Right ventricle myocardium superior (tissue), 1 donor: ENCODE measurements at regions of chr9 and their contacts with region 1.

Region 1: DNA sequence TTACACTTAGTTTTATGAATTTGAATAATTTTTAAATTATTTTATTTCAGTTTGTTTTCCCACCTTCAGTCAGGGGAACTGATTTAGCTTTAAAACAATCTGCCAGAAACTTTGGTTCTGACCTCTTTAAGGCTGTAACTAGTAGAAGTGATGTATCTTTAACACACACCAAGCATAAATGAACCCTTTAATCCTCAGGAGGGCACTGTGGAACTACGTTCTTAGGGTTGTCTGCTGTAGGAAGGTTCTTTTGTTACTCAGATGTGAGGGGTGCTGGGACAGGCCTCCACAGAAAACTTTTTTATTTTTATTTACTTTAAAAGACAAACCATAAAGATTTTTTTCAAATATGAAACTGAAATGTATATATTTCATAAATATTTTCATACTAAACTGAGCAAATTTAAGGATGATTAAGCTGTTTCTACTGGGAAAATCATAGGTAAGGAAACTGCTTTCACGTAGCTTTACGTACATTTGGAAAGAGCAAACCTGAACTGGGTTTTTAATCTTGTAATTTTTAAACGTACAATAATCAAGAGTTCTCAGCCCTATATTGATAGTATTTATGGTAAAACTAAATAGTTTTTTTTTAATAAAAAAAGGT is 5.3 kb downstream of the KLF4 start:
- DNase-seq: no peak
- ATAC-seq: peak; percentile 58

Region 2: DNA sequence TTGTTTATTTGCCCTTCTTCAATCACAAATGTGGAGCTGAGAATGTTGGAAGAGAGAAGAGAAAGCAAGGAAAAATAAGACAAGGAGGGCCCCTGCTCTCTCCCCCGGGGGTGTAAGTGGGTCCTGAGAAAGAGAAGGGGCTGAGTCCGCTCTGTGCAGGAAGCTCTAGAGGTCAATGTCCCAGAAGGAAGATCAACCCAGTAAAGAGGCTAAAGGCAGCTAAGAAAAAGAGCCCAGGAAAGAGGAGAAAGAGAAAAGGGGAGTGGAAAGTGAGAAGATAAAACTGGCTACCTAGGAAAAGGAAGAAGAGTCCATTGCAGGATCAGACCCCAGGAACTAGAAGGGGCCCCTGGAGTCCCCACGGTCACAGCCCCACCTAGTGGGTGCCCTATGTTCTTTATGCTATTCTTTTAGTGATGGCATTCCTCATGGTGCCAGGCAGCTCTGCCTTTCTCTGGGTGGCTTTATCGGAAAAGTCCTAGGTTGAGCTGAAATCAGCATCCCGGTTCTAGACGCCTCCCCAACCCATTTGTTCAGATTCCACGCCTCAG is 788.2 kb after region 1 on chr9:
- intact Hi-C with region 1: loop called (anchors 5 kb)
- DNase-seq: peak; percentile 63
- ATAC-seq: peak; percentile 91